Activated naive CD4-positive, alpha-beta T cell treated with anti-CD3 and anti-CD28 coated beads for 36 hours (primary cell): ENCODE measurements at regions of chr5 and their contacts with region 1.

Region 1: GRCh38 chr5:140357726-140358093 is 2.3 kb upstream of the SLC4A9 start:
- DNase-seq: peak; percentile 85
- H3K4me3 Mint-ChIP-seq: peak overlapping the region; percentile 56
- H3K27ac Mint-ChIP-seq: no peak overlapping the region
- H3K4me1 Mint-ChIP-seq: peaks cover 8% of the 10 kb centered on the region
- H3K27me3 Mint-ChIP-seq: peaks cover 3% of the 10 kb centered on the region

Region 2: DNA sequence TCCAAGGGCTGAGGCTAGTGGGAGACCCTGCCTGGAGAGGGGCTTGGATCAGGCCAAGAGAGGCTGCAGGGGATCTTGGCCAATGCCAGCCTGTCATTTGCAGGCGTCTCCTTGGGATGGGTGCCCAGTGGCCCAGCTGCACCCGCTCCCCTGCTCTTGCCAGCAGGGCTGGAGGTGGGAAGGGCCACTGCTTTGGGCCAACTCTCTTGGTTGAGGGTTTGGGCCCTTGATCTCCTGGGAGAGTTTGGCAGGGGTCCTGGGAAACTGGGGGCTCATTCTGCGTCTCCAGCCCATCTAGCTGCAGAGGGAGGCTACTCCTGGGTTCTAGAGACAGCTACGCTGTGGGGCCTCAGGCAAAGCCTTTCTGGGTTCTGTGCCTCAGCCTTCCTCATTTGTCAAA is 551.6 kb before region 1 on chr5:
- CTCF ChIA-PET with region 1: no interaction called
- intact Hi-C with region 1: no loop called
- DNase-seq: no peak
- H3K4me3 Mint-ChIP-seq: no peak overlapping the region
- H3K27ac Mint-ChIP-seq: no peak overlapping the region
- H3K4me1 Mint-ChIP-seq: no peaks in the 10 kb centered on the region
- H3K27me3 Mint-ChIP-seq: peaks cover 21% of the 10 kb centered on the region

Region 3: DNA sequence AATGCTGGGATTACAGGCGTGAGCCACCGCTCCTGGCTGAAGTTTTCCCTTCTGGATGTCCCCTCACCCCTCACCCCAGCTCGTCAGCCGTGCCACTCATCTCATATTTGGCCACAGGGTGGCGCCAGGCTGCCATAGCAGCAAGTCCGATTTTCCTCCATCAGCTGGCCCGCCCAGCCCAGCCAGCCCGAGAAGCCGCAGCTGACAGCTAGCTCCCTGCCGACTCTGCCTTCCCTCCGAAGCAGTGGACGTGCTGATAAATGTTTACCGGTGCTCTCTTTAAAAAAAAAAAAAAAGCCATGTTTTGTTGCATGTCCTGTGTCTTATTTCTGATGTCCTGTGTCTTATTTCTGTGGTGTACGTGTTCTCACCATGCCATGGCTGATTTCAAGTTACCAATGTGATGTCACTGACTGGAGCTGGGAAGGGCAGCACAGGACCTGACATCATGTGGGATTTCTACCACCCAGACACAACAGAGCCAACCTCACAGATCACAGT is 113.1 kb before region 1 on chr5:
- CTCF ChIA-PET with region 1: interaction called, 634 read pairs
- intact Hi-C with region 1: loop called (anchors 1 kb)
- DNase-seq: peak; percentile 91
- H3K4me3 Mint-ChIP-seq: no peak overlapping the region
- H3K27ac Mint-ChIP-seq: peak overlapping the region; percentile 65
- H3K4me1 Mint-ChIP-seq: peaks cover 27% of the 10 kb centered on the region
- H3K27me3 Mint-ChIP-seq: no peaks in the 10 kb centered on the region

Region 4: DNA sequence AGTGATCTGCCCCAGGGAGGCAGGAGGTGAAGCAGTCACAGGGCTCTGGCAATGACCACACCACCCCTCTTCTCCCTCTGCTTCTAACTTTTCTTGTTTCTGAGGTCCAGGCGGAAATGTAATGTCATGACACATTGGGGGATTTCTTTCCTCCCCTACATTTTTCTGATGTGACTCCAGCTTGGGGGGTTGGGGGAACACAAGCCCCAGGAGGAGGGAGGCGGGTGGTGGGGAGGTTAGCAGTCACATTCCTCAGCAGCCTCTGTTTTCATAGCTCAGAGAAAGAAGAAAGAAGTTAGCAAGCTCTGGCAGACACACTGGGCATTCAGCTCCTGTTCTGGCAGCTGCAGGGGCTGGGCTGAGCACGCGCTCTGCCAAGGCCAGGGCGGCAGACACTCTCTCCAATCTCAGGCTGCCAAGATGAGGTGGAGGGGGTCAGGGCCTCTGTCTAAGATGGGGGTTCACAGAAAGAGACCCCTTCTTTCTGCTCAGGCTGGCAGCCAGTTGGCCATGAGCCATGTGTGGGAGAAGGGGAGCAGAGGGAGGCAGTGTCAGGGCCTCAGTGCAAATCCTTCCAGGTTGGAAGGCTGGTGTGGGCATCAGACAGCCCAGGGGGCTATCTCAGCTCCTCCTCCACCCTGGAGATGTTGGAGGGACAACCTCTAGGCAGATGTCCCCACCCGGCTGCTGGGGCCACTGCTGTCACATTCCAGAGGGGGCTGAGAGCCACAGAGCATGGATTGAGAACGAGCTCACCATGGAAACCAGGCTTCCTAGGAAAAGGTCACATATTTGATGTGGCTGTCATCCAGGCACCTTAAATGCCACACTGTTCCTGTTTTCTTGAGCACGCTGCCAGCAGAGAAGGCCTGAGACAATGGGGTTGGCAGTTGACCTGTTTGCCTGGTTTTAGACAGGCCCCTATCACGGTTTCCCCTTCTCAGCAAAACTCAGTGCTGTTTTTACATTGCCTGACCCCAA is 34.7 kb before region 1 on chr5:
- CTCF ChIA-PET with region 1: no interaction called
- intact Hi-C with region 1: no loop called
- DNase-seq: no peak
- H3K4me3 Mint-ChIP-seq: no peak overlapping the region
- H3K27ac Mint-ChIP-seq: no peak overlapping the region
- H3K4me1 Mint-ChIP-seq: peaks cover 7% of the 10 kb centered on the region
- H3K27me3 Mint-ChIP-seq: no peaks in the 10 kb centered on the region

Region 5: DNA sequence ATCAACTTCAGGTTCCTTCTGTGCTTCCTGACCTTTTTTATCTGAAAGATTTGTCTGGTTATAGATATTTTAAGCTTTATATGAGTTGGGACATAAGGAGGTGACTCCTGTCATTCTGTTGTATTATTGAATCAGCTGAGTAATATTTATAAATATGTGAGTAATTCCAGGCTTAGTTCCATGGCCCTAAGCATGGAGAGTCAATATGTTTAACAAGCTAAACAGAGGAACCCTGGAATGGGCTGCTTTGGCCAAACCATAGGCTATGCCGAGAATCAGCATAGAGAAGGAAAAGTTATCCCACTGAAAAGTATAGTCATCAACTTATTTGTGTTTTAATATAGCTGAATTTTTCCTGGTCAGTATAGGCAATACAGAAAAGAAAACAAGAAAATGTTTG is 182.5 kb after region 1 on chr5:
- CTCF ChIA-PET with region 1: no interaction called
- intact Hi-C with region 1: no loop called
- DNase-seq: no peak
- H3K4me3 Mint-ChIP-seq: no peak overlapping the region
- H3K27ac Mint-ChIP-seq: no peak overlapping the region
- H3K4me1 Mint-ChIP-seq: peaks cover 1% of the 10 kb centered on the region
- H3K27me3 Mint-ChIP-seq: no peaks in the 10 kb centered on the region

Region 6: DNA sequence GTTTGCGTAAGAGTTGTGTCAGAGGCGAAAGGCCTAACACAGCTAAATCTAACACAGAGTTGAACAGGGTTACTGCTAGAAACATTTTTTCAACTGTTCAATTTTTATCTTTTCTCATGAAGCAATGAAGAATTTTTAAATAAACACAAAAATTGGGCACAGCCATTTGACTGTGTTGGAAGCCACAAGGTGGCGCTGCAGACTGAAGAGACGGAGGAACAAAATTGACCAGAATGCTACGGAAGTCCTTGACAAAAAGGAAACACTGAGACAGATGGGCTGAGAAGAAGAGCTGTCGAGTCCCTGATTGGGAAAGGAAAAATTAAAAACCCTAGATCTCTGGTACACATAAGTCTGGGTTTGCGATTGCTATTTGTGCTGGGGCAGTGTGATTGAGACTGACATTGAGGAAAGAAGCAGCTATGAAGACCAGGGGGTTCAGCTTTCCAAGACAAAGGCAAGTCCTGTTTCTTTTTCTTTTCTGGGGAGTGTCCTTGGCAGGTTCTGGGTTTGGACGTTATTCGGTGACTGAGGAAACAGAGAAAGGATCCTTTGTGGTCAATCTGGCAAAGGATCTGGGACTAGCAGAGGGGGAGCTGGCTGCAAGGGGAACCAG is 829.3 kb after region 1 on chr5 and contains the start of gene PCDHB9:
- CTCF ChIA-PET with region 1: no interaction called
- intact Hi-C with region 1: no loop called
- DNase-seq: peak; percentile 60
- H3K4me3 Mint-ChIP-seq: no peak within 1 kb of the TSS
- H3K27ac Mint-ChIP-seq: no peak within 1 kb of the TSS
- H3K4me1 Mint-ChIP-seq: peaks cover 2% of the 10 kb centered on the region
- H3K27me3 Mint-ChIP-seq: peaks cover 38% of the 10 kb centered on the region
- total RNA-seq, gene PCDHB9: not detected